H1 (cell line): ENCODE measurements at regions of chr7 and their contacts with region 1.

Region 1: GRCh38 chr7:26200444-26201246 is at the start of gene HNRNPA2B1:
- DNase-seq: peak; percentile 97 to 98
- H3K4me3 ChIP-seq: peak within 1 kb of the TSS; percentile 98 to 99 (median 98)
- H3K27ac ChIP-seq: peak within 1 kb of the TSS; percentile 99
- H3K4me1 ChIP-seq: peaks cover 0 to 9% (median 3%) of the 10 kb centered on the region in 4 experiments; a peak in 3 of 7 replicates
- H3K27me3 ChIP-seq: no peaks in the 10 kb centered on the region
- CTCF ChIP-seq: no peak
- EP300 ChIP-seq: no peak
- POLR2A ChIP-seq: peak; percentile 98 to 99
- RAD21 ChIP-seq: no peak
- total RNA-seq, gene HNRNPA2B1: 1,232 and 1,255 TPM in 2 replicates

Region 2: GRCh38 chr7:25950488-25951030 is 250.1 kb before region 1 on chr7:
- CTCF ChIA-PET with region 1: interaction called, 3 read pairs
- POLR2A ChIA-PET with region 1: interaction called, 11 read pairs
- DNase-seq: peak; percentile 27 to 77
- H3K4me3 ChIP-seq: peak overlapping the region; percentile 80 to 95 (median 94)
- H3K27ac ChIP-seq: peak overlapping the region; percentile 76; the same call in 1 of the 2 replicates
- H3K4me1 ChIP-seq: peaks cover 5 to 26% (median 24%) of the 10 kb centered on the region in 4 experiments
- H3K27me3 ChIP-seq: no peaks in the 10 kb centered on the region
- CTCF ChIP-seq: no peak
- EP300 ChIP-seq: 0 out of 3 replicates have a peak, but pooled peaks of 1 of the 2 experiments have one; percentile 47
- POLR2A ChIP-seq: peak in 1 of 2 experiments; percentile 63; a peak in 2 of 3 replicates
- RAD21 ChIP-seq: no peak

Region 3: DNA sequence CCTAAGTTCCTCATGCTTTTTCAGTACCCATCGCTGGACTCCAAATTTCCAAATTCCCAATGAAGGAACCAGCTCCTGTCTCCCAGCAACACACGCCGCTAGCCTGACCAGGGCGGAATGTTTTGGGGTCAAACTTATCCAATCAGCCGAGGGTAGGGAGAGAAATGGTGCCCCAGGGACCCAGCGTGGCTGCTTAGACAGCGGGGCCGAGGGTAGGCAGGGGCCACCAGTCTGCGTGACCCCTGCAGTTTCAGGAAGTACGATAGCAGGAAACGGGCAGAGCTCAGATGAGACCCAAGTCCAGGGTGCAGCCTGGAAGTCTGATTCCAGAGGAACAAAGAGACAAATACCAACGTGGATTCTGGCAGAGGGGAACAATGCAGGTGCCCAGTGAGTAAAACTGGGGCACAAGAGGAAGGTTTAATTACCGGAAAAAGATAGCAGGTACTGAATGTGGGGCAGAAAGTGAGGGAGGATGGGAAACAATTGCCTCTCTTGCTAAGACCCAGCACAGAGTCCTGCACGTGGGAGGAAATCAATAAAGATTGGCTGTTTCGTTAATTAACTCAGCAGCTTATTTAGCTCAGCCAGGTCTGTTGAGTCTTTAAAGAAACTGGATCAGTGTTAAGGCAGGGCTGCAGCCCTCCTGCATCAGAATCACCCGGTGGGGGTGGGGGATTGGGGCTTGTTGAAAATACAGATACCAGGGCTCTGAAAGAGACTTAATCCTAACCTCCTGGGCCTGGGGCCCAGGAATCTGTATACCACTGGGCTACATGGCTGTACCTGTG is 99.1 kb before region 1 on chr7:
- CTCF ChIA-PET with region 1: interaction called, 5 read pairs
- POLR2A ChIA-PET with region 1: interaction called, 14 read pairs
- DNase-seq: peak in 1 of 2 experiments; percentile 61
- H3K4me3 ChIP-seq: peak overlapping the region in 1 of 4 experiments; percentile 7; a peak in 1 of 8 replicates
- H3K27ac ChIP-seq: peak overlapping the region; percentile 53; the same call in 1 of the 2 replicates
- H3K4me1 ChIP-seq: peaks cover 7 to 16% (median 12%) of the 10 kb centered on the region in 4 experiments
- H3K27me3 ChIP-seq: no peaks in the 10 kb centered on the region
- CTCF ChIP-seq: no peak
- EP300 ChIP-seq: no peak
- POLR2A ChIP-seq: no peak; a peak in 1 of 3 replicates
- RAD21 ChIP-seq: 0 out of 4 replicates have a peak, but pooled peaks of 1 of the 2 experiments have one; percentile 2

Region 4: GRCh38 chr7:26187380-26188205 is 13.1 kb before region 1 on chr7:
- CTCF ChIA-PET with region 1: interaction called, 24 read pairs
- POLR2A ChIA-PET with region 1: interaction called, 578 read pairs
- DNase-seq: no peak
- H3K4me3 ChIP-seq: no peak overlapping the region
- H3K27ac ChIP-seq: peak overlapping the region; percentile 13
- H3K4me1 ChIP-seq: no peaks in the 10 kb centered on the region
- H3K27me3 ChIP-seq: no peaks in the 10 kb centered on the region
- CTCF ChIP-seq: no peak
- EP300 ChIP-seq: no peak
- POLR2A ChIP-seq: peak; percentile 89 to 92
- RAD21 ChIP-seq: no peak

Region 5: GRCh38 chr7:26237035-26237807 is 36.6 kb after region 1 on chr7:
- CTCF ChIA-PET with region 1: interaction called, 3 read pairs
- POLR2A ChIA-PET with region 1: interaction called, 14 read pairs
- DNase-seq: no peak
- H3K4me3 ChIP-seq: no peak overlapping the region
- H3K27ac ChIP-seq: no peak overlapping the region
- H3K4me1 ChIP-seq: no peaks in the 10 kb centered on the region
- H3K27me3 ChIP-seq: no peaks in the 10 kb centered on the region
- CTCF ChIP-seq: no peak
- EP300 ChIP-seq: no peak
- POLR2A ChIP-seq: no peak
- RAD21 ChIP-seq: no peak

Region 6: DNA sequence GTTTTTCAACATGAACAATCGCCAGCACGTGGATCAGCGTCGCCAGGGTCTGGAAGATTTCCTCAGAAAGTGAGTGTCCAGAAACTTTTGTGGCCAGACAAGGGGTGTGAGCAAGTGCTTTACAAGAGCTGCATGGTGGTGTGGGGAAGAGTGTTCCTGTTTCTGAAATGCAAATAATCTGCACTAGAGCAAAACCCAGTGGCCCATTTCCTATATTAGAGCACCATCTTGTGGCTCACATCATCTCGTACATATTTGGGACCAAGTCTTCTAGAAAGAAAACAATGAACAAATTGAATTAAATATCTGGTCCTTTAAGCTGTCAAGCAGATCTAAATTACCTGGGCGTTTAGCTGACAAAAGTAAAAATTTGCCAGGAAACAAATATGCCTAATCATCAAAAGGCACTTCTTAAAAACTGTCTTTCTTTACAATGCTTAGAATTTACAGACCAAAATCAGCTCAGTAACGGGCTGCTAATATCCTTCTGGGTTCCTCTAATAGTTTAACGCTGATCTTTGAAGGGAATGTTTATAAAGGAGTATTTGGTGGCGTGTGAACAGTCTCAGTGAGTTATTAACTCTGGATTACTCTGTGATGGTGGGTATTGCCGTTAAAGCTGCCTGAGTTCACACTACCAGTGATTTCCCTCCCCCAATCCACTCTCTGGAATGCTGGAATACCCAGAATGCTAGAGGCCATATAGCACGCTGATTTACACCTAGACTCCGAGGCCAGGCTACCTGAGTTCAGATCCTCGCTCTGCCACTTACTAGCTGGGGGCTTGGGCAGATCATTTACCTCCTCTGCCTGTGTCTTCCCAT is 164.6 kb after region 1 on chr7:
- CTCF ChIA-PET with region 1: interaction called, 9 read pairs
- POLR2A ChIA-PET with region 1: interaction called, 24 read pairs
- DNase-seq: no peak
- H3K4me3 ChIP-seq: no peak overlapping the region
- H3K27ac ChIP-seq: no peak overlapping the region
- H3K4me1 ChIP-seq: no peaks in the 10 kb centered on the region; a peak in 1 of 7 replicates
- H3K27me3 ChIP-seq: no peaks in the 10 kb centered on the region
- CTCF ChIP-seq: peak in 2 of 3 experiments; percentile 64 to 73; a peak in 3 of 4 replicates
- EP300 ChIP-seq: no peak
- POLR2A ChIP-seq: no peak
- RAD21 ChIP-seq: peak; percentile 95 to 98